ENCODE measurements at regions of chr4 and their contacts with region 1.

Region 1: DNA sequence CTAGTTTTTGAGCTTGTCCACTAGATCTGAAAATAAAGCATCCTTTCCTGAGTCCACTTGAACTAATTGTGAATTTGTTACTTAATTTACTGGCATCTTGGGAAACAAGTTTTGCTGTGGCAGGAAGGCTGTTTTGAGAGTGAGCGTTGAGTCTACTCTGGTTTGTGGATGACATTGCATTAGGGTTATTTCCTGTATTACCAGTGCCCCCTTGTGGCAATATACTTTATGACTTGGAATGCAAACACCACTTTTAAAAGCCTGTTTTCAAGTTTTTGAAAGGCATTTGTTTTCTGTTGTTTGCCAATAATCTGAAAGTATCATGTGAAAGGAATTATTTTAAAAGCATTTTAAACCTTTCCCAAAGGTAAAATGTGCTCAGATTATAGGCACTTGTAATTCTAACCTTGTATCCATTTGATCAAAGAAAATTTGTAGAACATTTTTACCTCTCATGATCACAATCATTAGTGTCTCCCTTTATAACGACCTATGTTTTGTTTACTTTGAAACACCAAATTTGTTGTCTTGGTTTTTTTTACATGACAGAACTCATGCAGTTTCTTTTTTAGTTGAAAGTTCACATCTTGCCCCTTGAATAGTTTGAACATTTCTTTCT is 18.0 kb upstream of the CYP2U1 start:
- DNase-seq: peak; percentile 33
- ATAC-seq: peak; percentile 84; the same call in 1 of the 2 replicates
- H3K4me3 ChIP-seq: no peak overlapping the region
- H3K27ac ChIP-seq: no peak overlapping the region
- H3K4me1 ChIP-seq: no peaks in the 10 kb centered on the region
- H3K27me3 ChIP-seq: no peaks in the 10 kb centered on the region
- CTCF ChIP-seq: peak; percentile 62; the same call in 1 of the 2 replicates

Region 2: DNA sequence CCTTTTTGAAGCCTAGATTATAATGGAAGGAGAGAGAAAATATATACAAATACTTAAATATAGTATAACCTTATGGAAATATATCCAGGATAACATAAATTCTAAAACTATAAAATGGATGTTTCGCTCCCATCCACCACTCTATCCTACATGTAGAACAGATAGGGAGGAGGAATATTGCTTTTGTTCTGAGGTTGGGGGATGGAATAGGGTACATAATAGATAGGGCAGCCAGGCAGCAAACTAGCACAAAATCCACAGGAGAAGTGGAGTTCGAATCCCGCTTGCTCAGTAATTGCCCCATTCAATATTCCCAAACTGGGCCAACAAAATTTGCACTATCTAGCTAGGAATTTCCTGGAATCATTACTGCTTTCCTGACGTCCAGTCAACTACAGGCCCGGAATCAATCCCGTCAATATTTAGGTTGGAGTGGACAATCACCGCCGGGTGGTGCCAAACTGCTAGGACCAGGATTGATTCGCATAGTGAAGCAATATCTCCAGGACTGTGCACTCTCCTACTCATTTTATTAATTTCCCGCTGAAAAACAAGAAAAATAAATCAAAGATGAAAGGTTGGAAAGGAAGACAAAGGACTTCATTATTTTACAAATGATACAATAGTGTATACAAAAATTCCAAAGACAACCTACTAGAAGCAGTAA is 153.0 kb before region 1 on chr4:
- CTCF ChIA-PET with region 1: no interaction called
- POLR2A ChIA-PET with region 1: no interaction called
- in situ Hi-C with region 1: no loop called
- intact Hi-C with region 1: loop called (anchors 1 kb)
- DNase-seq: no peak
- ATAC-seq: peak; percentile 90
- H3K4me3 ChIP-seq: no peak overlapping the region
- H3K27ac ChIP-seq: no peak overlapping the region
- H3K4me1 ChIP-seq: no peaks in the 10 kb centered on the region
- H3K27me3 ChIP-seq: no peaks in the 10 kb centered on the region
- CTCF ChIP-seq: peak; percentile 73

Measured in Panc1 (cell line).